Activated T-helper 2 cell treated with anti-CD3 and anti-CD28 coated beads, Interferon-gamma antibody, Interleukin-2, Interleukin-4, amounts not matched to agents 10 μg/mL and 5 μg/mL and 100 μg/mL, durations not matched to agents 14 hours and 24 hours and 36 hours (primary cell): ENCODE measurements at regions of chr14 and their contacts with region 1.

Region 1: GRCh38 chr14:30588873-30589272 is 29.9 kb downstream of the G2E3 start:
- DNase-seq: no peak
- H3K4me3 Mint-ChIP-seq: no peak overlapping the region
- H3K27ac Mint-ChIP-seq: no peak overlapping the region
- H3K4me1 Mint-ChIP-seq: peaks cover 16% of the 10 kb centered on the region
- H3K27me3 Mint-ChIP-seq: no peaks in the 10 kb centered on the region

Region 2: DNA sequence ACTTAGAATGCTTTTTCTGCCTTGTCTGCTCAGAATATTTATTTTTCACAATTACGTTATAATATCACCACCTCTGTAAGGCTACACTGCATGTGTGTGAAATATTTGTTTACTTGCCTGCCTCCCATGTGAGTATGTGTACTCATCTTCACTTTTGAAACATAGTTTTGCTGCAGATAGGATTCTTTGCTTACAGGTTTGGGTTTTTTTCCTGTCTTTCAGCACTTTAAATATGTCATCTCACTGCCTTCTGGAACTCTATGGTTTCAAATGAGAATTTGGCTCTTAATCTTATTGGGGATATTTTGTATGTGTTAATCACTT is 19.0 kb before region 1 on chr14:
- intact Hi-C with region 1: loop called (anchors 2 kb)
- DNase-seq: no peak
- H3K4me3 Mint-ChIP-seq: no peak overlapping the region
- H3K27ac Mint-ChIP-seq: no peak overlapping the region
- H3K4me1 Mint-ChIP-seq: peaks cover 61% of the 10 kb centered on the region
- H3K27me3 Mint-ChIP-seq: no peaks in the 10 kb centered on the region